GM10248 (cell line): ENCODE measurements at regions of chr10 and their contacts with region 1.

Region 1: DNA sequence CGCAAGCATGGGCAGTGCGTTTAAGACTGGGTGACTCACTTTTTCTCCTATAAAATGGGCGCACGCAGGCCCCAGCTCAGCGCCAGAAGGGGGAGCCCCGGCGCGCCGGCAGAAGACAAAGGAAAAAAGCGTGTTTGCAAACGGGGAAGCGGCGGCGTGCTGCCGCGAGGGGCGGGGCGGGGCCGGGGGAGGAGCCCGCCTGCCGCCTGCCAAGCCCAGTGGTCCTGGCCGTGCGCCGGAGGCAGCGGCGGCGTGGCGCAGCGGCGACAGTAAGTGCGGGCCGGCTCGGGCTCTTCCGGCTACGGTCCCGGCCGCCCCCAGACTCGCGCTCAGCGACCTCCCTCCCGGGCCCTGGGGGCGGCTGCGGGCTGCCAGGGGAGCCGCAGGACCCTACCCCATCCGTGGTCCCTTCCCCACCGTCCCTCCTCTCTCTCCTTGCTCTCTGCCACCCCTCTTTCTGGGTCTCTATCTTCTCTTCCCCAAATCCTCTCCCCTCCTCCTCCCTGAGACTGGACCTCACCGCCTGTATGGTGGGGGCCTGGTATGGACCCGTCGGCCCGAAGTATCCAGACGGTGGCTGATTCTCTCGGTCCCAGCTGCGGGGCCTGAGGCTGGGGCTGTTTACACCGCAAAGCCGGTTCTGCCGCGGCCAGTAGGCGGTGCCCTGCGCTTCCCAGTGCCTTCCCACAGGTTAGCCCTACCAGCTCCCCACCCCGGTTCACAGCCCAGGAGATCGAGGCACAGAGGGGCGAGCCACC is at the start of gene SLC29A3:
- DNase-seq: peak; percentile 94
- CTCF ChIP-seq: peak; percentile 84

Region 2: GRCh38 chr10:71371750-71372166 is 52.5 kb after region 1 on chr10:
- CTCF ChIA-PET with region 1: interaction called, 25 read pairs
- POLR2A ChIA-PET with region 1: no interaction called
- DNase-seq: peak; percentile 45
- CTCF ChIP-seq: no peak

Region 3: GRCh38 chr10:71378336-71379117 is 59.3 kb after region 1 on chr10:
- CTCF ChIA-PET with region 1: interaction called, 25 read pairs
- POLR2A ChIA-PET with region 1: no interaction called
- DNase-seq: no peak
- CTCF ChIP-seq: no peak